KBM-7 (cell line): ENCODE measurements at regions of chrX and their contacts with region 1.

Region 1: DNA sequence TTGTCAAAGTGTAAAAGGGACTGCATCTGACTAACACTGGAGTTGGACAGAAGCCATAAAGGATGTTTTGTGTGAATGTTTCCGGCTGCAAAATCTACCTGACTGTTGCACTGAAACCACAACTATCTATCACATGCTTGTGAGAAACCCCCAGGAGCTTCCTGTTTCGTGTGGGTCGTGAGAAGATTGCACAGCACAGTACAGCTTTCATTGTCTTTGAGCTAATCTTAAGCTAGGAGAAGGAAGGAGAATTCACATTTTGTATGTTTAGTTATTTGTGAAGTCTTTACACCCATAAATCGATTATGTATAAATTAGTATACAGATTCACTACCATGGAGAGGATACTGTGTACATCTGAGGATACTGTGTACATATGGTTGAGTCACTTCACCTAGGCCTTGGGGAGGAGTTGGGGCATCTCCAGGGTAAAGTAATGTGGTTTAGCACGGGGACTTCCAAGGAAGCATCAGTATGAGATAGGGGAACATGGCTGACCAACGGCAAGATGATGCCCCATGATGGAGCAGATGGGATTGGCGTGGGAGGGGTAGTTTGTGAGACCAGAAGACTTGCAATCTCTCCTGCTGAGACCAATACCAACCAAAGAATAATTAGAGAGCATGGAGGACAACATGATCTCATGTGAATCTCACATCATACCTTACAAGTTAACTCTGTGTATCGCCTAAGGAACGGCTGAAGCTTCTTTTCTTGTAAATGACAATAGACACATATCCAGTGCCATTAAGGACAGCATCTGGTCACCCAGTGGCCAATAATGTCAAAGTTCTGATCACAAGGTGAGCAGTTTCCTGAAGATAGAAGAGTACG is 43.1 kb upstream of the FAM9C start:
- DNase-seq: peak; percentile 96

Region 2: GRCh38 chrX:12984629-12985319 is 102.8 kb before region 1 on chrX:
- in situ Hi-C with region 1: loop called (anchors 10 kb)
- DNase-seq: peak; percentile 64

Region 3: GRCh38 chrX:13487731-13488523 is 400.4 kb after region 1 on chrX:
- in situ Hi-C with region 1: loop called (anchors 25 kb)
- DNase-seq: peak; percentile 86